ENCODE measurements at regions of chr4 and their contacts with region 1.

Region 1: GRCh38 chr4:183987987-183988392 is 82.9 kb downstream of the STOX2 start:
- DNase-seq: peak; percentile 86
- H3K4me3 ChIP-seq: peak overlapping the region; percentile 31 to 44 (median 38)
- H3K27ac ChIP-seq: peak overlapping the region; percentile 90
- H3K4me1 ChIP-seq: peaks cover 18% of the 10 kb centered on the region
- H3K27me3 ChIP-seq: no peaks in the 10 kb centered on the region
- CTCF ChIP-seq: no peak

Region 2: GRCh38 chr4:183876268-183876934 is 111.6 kb before region 1 on chr4:
- CTCF ChIA-PET with region 1: no interaction called
- dilution Hi-C with region 1: no loop called
- in situ Hi-C with region 1: no loop called
- intact Hi-C with region 1: loop called (anchors 5 kb)
- DNase-seq: peak; percentile 81
- H3K4me3 ChIP-seq: peak overlapping the region; percentile 33 to 48 (median 41)
- H3K27ac ChIP-seq: no peak overlapping the region
- H3K4me1 ChIP-seq: peaks cover 8% of the 10 kb centered on the region
- H3K27me3 ChIP-seq: no peaks in the 10 kb centered on the region
- CTCF ChIP-seq: no peak

Region 3: GRCh38 chr4:184066584-184067300 is 78.8 kb after region 1 on chr4:
- CTCF ChIA-PET with region 1: no interaction called
- dilution Hi-C with region 1: no loop called
- in situ Hi-C with region 1: no loop called
- intact Hi-C with region 1: no loop called
- DNase-seq: no peak
- H3K4me3 ChIP-seq: no peak overlapping the region
- H3K27ac ChIP-seq: no peak overlapping the region
- H3K4me1 ChIP-seq: no peaks in the 10 kb centered on the region
- H3K27me3 ChIP-seq: peaks cover 4% of the 10 kb centered on the region
- CTCF ChIP-seq: no peak

Measured in mammary epithelial cell (primary cell).